Caco-2 (cell line): ENCODE measurements at regions of chr22 and their contacts with region 1.

Region 1: GRCh38 chr22:37807410-37808293 is at the start of gene GCAT:
- DNase-seq: peak; percentile 94 to 96
- H3K4me3 ChIP-seq: peak within 1 kb of the TSS; percentile 46
- H3K4me3 Mint-ChIP-seq: peak within 1 kb of the TSS; percentile 90
- H3K27ac Mint-ChIP-seq: peak within 1 kb of the TSS; percentile 92
- H3K4me1 ChIP-seq: peaks cover 13% of the 10 kb centered on the region
- H3K4me1 Mint-ChIP-seq: peaks cover 25% of the 10 kb centered on the region
- H3K27me3 ChIP-seq: no peaks in the 10 kb centered on the region
- H3K27me3 Mint-ChIP-seq: no peaks in the 10 kb centered on the region
- CTCF ChIP-seq: no peak
- total RNA-seq, gene GCAT: 24.4 and 24.8 TPM in 2 replicates

Region 2: GRCh38 chr22:37616201-37617083 is 191.2 kb before region 1 on chr22:
- CTCF ChIA-PET with region 1: no interaction called
- POLR2A ChIA-PET with region 1: no interaction called
- intact Hi-C with region 1: no loop called
- DNase-seq: no peak
- H3K4me3 ChIP-seq: no peak overlapping the region
- H3K4me3 Mint-ChIP-seq: no peak overlapping the region
- H3K27ac Mint-ChIP-seq: no peak overlapping the region
- H3K4me1 ChIP-seq: no peaks in the 10 kb centered on the region
- H3K4me1 Mint-ChIP-seq: no peaks in the 10 kb centered on the region
- H3K27me3 ChIP-seq: no peaks in the 10 kb centered on the region
- H3K27me3 Mint-ChIP-seq: no peaks in the 10 kb centered on the region
- CTCF ChIP-seq: no peak

Region 3: DNA sequence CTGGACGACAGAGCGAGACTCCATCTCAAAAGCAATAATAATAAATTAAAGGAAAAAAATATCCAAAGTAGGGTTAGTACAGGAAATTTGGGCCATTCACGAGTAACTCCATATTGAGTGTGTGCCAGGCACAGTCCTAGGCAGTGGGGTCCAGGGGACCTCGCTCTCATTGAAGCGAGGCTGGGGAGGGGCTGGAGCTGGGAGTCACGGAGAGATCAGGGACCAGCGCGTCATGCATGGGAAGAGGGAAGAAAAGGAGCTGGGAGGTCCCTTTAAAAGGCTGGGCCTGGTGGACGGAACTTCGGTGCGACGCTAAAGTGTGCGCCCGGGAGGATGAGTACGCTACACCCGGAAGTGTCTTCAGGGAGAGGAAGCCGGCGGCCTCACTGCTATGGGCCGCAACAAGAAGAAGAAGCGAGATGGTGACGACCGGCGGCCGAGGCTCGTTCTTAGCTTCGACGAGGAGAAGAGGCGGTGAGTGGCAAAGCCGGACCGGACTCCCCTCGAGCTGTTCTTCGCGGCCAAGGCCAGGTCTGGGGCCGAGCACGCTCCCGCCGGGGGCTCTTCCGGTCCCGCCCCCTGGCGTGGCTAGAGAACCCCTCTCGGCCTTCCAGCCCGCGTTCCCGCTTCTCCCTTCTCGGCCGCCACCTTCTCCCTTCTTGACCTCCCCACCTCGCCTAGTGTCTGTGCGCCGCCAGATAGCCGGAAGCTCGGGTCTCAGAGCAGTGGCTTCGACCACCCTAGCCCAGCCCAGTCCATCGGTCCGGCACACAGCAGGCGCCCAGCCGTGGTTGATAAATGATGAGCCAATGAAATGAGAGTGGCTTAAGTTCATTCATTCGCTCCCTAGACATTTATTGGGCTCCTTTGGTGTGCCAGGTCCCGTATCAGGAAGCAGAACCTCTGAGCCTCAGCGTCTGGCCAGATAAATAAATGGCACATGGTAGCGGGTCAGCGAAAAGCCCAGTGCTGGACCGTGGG is 121.4 kb before region 1 on chr22 and contains the start of gene NOL12:
- CTCF ChIA-PET with region 1: no interaction called
- POLR2A ChIA-PET with region 1: interaction called, 10 read pairs
- intact Hi-C with region 1: no loop called
- DNase-seq: peak; percentile 85
- H3K4me3 ChIP-seq: peak within 1 kb of the TSS; percentile 97
- H3K4me3 Mint-ChIP-seq: peak within 1 kb of the TSS; percentile 99
- H3K27ac Mint-ChIP-seq: peak within 1 kb of the TSS; percentile 95
- H3K4me1 ChIP-seq: peaks cover 16% of the 10 kb centered on the region; the same call in 1 of the 2 replicates
- H3K4me1 Mint-ChIP-seq: no peaks in the 10 kb centered on the region
- H3K27me3 ChIP-seq: no peaks in the 10 kb centered on the region; the same call in 1 of the 2 replicates
- H3K27me3 Mint-ChIP-seq: no peaks in the 10 kb centered on the region
- CTCF ChIP-seq: no peak
- total RNA-seq, gene NOL12: 20.2 and 22.3 TPM in 2 replicates

Region 4: GRCh38 chr22:37745548-37746365 is 61.9 kb before region 1 on chr22:
- CTCF ChIA-PET with region 1: no interaction called
- POLR2A ChIA-PET with region 1: interaction called, 5 read pairs
- intact Hi-C with region 1: loop called (anchors 5 kb)
- DNase-seq: peak; percentile 90 to 92
- H3K4me3 ChIP-seq: peak overlapping the region; percentile 97
- H3K4me3 Mint-ChIP-seq: peak overlapping the region; percentile 90
- H3K27ac Mint-ChIP-seq: peak overlapping the region; percentile 63
- H3K4me1 ChIP-seq: peaks cover 12% of the 10 kb centered on the region
- H3K4me1 Mint-ChIP-seq: peaks cover 13% of the 10 kb centered on the region
- H3K27me3 ChIP-seq: no peaks in the 10 kb centered on the region
- H3K27me3 Mint-ChIP-seq: no peaks in the 10 kb centered on the region
- CTCF ChIP-seq: no peak

Region 5: GRCh38 chr22:37817705-37818408 is 10.2 kb after region 1 on chr22:
- CTCF ChIA-PET with region 1: interaction called, 12 read pairs
- POLR2A ChIA-PET with region 1: interaction called, 13 read pairs
- intact Hi-C with region 1: no loop called
- DNase-seq: peak; percentile 72 to 91
- H3K4me3 ChIP-seq: no peak overlapping the region
- H3K4me3 Mint-ChIP-seq: peak overlapping the region; percentile 37
- H3K27ac Mint-ChIP-seq: no peak overlapping the region
- H3K4me1 ChIP-seq: peaks cover 9% of the 10 kb centered on the region
- H3K4me1 Mint-ChIP-seq: peaks cover 12% of the 10 kb centered on the region
- H3K27me3 ChIP-seq: no peaks in the 10 kb centered on the region
- H3K27me3 Mint-ChIP-seq: no peaks in the 10 kb centered on the region
- CTCF ChIP-seq: peak; percentile 85 to 87

Region 6: DNA sequence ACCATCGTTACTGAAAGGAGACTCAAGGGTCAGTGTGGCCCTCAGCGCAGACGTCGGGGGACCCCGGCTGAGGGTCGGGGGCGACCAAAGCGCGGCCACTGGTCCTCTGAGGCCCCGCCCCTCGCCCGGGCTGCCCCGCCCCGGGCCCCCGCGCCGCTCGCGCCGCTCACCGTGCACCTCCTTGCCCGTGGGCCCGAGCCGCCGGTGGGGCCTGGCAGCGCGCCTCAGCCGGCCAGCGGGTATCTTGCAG is 36.0 kb after region 1 on chr22:
- CTCF ChIA-PET with region 1: interaction called, 5 read pairs
- POLR2A ChIA-PET with region 1: interaction called, 19 read pairs
- intact Hi-C with region 1: loop called (anchors 2 kb)
- DNase-seq: no peak
- H3K4me3 ChIP-seq: peak overlapping the region; percentile 75
- H3K4me3 Mint-ChIP-seq: peak overlapping the region; percentile 79
- H3K27ac Mint-ChIP-seq: peak overlapping the region; percentile 53
- H3K4me1 ChIP-seq: peaks cover 9% of the 10 kb centered on the region; the same call in 1 of the 2 replicates
- H3K4me1 Mint-ChIP-seq: peaks cover 7% of the 10 kb centered on the region
- H3K27me3 ChIP-seq: no peaks in the 10 kb centered on the region
- H3K27me3 Mint-ChIP-seq: no peaks in the 10 kb centered on the region
- CTCF ChIP-seq: no peak

Region 7: DNA sequence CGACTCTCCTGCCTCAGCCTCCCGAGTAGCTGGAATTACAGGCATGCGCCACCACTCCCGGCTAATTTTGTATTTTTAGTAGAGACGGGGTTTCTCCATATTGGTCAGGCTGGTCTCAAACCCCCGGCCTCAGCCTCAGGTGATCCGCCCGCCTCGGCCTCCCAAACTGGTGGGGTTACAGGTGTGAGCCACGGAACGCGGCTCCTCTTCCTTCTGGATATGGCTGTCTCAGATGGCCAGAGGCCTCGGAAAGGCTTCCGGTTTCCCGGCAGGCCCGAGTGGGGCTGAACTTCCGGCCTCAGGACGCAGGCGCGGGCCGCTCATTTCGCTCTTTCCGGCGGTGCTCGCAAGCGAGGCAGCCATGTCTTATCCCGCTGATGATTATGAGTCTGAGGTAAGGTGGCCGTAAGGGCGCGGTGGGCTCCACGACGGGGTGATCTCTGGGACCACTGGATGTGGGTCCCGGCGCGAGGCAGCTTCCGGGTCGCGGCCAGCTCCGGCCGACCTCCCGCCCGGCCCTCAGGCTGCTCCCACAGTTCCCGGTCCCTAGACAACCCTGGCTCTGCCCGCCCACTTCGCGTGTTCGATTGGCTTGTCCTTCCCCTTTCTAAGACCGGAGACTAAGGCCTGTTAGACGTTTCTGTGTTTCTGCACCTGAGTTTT is 41.6 kb after region 1 on chr22 and contains the start of gene EIF3L:
- CTCF ChIA-PET with region 1: interaction called, 5 read pairs
- POLR2A ChIA-PET with region 1: interaction called, 19 read pairs
- intact Hi-C with region 1: loop called (anchors 2 kb)
- DNase-seq: peak; percentile 89 to 92
- H3K4me3 ChIP-seq: peak within 1 kb of the TSS; percentile 77
- H3K4me3 Mint-ChIP-seq: peak within 1 kb of the TSS; percentile 95
- H3K27ac Mint-ChIP-seq: peak within 1 kb of the TSS; percentile 91
- H3K4me1 ChIP-seq: no peaks in the 10 kb centered on the region
- H3K4me1 Mint-ChIP-seq: peaks cover 7% of the 10 kb centered on the region
- H3K27me3 ChIP-seq: no peaks in the 10 kb centered on the region
- H3K27me3 Mint-ChIP-seq: no peaks in the 10 kb centered on the region
- CTCF ChIP-seq: no peak
- total RNA-seq, gene EIF3L: 524 and 554 TPM in 2 replicates

Region 8: GRCh38 chr22:37953437-37954179 is 146.0 kb after region 1 on chr22 and contains the starts of genes C22orf23 and POLR2F:
- CTCF ChIA-PET with region 1: no interaction called
- POLR2A ChIA-PET with region 1: interaction called, 7 read pairs
- intact Hi-C with region 1: loop called (anchors 10 kb)
- DNase-seq: peak; percentile 93
- H3K4me3 ChIP-seq: peak within 1 kb of the TSS; percentile 69
- H3K4me3 Mint-ChIP-seq: peak within 1 kb of the TSS; percentile 80
- H3K27ac Mint-ChIP-seq: peak within 1 kb of the TSS; percentile 90
- H3K4me1 ChIP-seq: peaks cover 5% of the 10 kb centered on the region; the same call in 1 of the 2 replicates
- H3K4me1 Mint-ChIP-seq: peaks cover 10% of the 10 kb centered on the region
- H3K27me3 ChIP-seq: no peaks in the 10 kb centered on the region
- H3K27me3 Mint-ChIP-seq: no peaks in the 10 kb centered on the region
- CTCF ChIP-seq: peak in 1 of 2 experiments; percentile 4
- total RNA-seq, gene C22orf23: not detected in 2 replicates
- total RNA-seq, gene POLR2F: 116 and 122 TPM in 2 replicates